ENCODE measurements at regions of chr15 and their contacts with region 1.

Region 1: DNA sequence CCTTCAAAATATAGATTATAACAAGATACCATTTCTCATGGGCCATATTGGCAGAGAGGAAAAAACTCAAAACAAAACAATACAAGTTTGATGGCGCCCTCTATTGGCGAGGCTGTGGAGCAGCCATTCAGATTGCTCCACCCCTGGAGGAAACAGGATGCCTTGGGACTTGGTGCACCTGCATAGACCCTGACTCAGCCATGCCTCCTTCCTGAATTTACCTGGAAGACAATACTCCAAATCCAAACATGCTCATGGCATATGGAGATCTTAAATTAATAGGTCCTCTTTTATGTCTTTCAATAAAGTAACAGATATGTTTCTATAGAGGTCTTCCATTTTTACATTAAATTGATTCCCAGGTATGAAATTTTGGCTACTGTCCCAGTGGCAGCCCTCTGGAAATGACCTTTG is 90.0 kb downstream of the APBA2 start:
- DNase-seq: peak; percentile 37 to 78 (median 61)
- H3K4me3 ChIP-seq: no peak overlapping the region
- H3K4me3 Mint-ChIP-seq: no peak overlapping the region
- H3K27ac ChIP-seq: no peak overlapping the region
- H3K27ac Mint-ChIP-seq: peak overlapping the region in 3 of 8 donors; percentile 40 to 49 (median 49)
- H3K4me1 ChIP-seq: peaks cover 8% of the 10 kb centered on the region
- H3K4me1 Mint-ChIP-seq: peaks cover 14 to 54% (median 14%) of the 10 kb centered on the region in 3 donors
- H3K27me3 ChIP-seq: no peaks in the 10 kb centered on the region
- H3K27me3 Mint-ChIP-seq: no peaks in the 10 kb centered on the region

Region 2: GRCh38 chr15:28873541-28874190 is 102.1 kb before region 1 on chr15:
- CTCF ChIA-PET with region 1: interaction called, 13 read pairs
- POLR2A ChIA-PET with region 1: no interaction called
- DNase-seq: peak in 3 of 5 donors; percentile 19 to 66 (median 56)
- H3K4me3 ChIP-seq: no peak overlapping the region
- H3K4me3 Mint-ChIP-seq: no peak overlapping the region
- H3K27ac ChIP-seq: no peak overlapping the region
- H3K27ac Mint-ChIP-seq: peak overlapping the region in 1 of 8 donors; percentile 19
- H3K4me1 ChIP-seq: peaks cover 9% of the 10 kb centered on the region
- H3K4me1 Mint-ChIP-seq: peaks cover 0 to 4% (median 0%) of the 10 kb centered on the region in 3 donors
- H3K27me3 ChIP-seq: no peaks in the 10 kb centered on the region
- H3K27me3 Mint-ChIP-seq: peaks cover 0 to 3% of the 10 kb centered on the region in 2 donors

Region 3: DNA sequence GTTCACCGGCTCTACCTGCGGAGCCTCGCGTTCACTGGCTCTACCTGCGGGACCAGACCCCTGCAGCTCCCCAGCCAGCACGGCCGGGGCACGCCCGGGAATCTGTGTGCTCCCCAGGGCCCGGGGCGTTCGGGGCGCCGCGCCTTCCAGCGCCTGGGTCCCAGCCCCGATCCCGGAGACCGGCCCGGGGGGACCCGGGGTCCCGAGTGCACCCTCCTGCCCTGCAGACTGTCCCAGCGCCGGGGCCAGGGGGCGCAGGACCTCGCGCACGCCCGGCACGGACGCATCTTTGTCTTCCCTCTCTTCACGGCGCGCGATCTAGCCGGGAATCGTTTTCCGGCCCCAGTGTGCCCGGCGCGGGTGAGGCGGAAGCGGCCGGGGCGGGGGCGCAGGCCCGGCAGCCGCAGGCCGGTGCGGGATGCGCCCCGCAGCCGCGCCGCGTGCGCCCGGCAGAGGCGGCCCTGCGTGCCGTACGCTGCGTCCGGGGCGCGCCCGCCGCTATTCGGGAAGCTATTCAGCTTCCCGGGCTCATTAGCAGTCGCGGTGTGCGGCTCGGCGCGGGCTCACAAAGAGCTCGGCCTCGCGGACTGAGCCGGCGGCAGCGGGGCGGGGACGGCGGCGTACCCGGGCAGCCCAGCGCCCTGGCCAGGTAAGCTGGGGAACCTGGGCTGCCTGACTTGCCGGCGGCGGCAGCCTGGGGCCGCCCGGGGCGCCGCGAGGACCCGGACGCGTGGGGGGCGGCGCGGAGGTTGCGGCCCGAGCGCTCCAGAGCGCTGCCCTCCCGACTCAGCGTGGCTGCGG is 89.9 kb before region 1 on chr15 and contains the start of gene APBA2:
- CTCF ChIA-PET with region 1: interaction called, 12 read pairs
- POLR2A ChIA-PET with region 1: no interaction called
- DNase-seq: peak; percentile 2 to 72 (median 48)
- H3K4me3 ChIP-seq: peak within 1 kb of the TSS; percentile 60
- H3K4me3 Mint-ChIP-seq: peak within 1 kb of the TSS; percentile 76 to 91 (median 88)
- H3K27ac ChIP-seq: peak within 1 kb of the TSS; percentile 27
- H3K27ac Mint-ChIP-seq: peak within 1 kb of the TSS in 4 of 8 donors; percentile 5 to 91 (median 84)
- H3K4me1 ChIP-seq: peaks cover 49% of the 10 kb centered on the region
- H3K4me1 Mint-ChIP-seq: peaks cover 30 to 47% (median 32%) of the 10 kb centered on the region in 3 donors
- H3K27me3 ChIP-seq: no peaks in the 10 kb centered on the region
- H3K27me3 Mint-ChIP-seq: peaks cover 0 to 3% of the 10 kb centered on the region in 2 donors
- total RNA-seq, gene APBA2: 15.7 to 18.0 TPM

Region 4: DNA sequence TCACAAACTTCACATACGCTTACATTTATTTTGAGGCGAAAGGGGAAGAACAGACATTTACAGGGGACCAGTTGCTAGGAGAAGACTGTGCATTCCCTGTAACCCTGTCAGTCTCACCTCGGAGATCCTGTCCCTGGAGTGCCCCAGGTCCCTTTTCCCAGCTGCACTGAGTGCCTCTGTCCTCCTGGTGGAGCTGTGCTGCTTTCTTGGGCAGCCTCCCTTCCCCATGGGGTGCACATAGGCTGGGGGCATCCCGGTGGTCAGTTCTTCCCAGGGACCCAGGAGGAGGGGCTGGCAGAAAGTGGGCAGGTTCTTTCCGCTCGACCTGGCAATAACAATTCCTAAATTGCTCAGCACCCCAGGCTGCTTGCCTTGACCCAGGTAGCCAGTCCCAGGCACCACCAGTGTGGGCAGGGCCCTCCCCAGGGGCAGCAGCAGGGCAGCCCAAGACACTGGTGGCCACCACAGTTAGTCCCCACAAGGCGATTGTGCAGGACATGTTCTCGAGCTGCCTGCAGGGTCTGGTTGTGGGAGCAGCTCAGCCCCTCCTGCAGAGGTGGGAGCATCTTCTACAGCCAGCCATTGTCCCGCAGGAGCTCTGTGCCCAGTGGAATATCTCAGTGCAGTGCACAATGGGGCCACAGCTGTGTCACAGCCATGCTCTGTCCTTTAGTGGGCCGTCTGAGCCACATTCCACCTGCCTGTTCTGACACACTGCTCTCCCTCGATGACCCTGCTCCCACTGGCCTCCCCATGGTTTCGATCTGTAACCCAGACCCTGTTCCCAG is 53.7 kb before region 1 on chr15:
- CTCF ChIA-PET with region 1: interaction called, 10 read pairs
- POLR2A ChIA-PET with region 1: no interaction called
- DNase-seq: no peak
- H3K4me3 ChIP-seq: no peak overlapping the region
- H3K4me3 Mint-ChIP-seq: peak overlapping the region in 6 of 7 donors; percentile 58 to 90 (median 64)
- H3K27ac ChIP-seq: no peak overlapping the region
- H3K27ac Mint-ChIP-seq: peak overlapping the region in 5 of 8 donors; percentile 52 to 95 (median 76)
- H3K4me1 ChIP-seq: peaks cover 42% of the 10 kb centered on the region
- H3K4me1 Mint-ChIP-seq: peaks cover 41 to 86% (median 61%) of the 10 kb centered on the region in 3 donors
- H3K27me3 ChIP-seq: no peaks in the 10 kb centered on the region
- H3K27me3 Mint-ChIP-seq: no peaks in the 10 kb centered on the region

Region 5: DNA sequence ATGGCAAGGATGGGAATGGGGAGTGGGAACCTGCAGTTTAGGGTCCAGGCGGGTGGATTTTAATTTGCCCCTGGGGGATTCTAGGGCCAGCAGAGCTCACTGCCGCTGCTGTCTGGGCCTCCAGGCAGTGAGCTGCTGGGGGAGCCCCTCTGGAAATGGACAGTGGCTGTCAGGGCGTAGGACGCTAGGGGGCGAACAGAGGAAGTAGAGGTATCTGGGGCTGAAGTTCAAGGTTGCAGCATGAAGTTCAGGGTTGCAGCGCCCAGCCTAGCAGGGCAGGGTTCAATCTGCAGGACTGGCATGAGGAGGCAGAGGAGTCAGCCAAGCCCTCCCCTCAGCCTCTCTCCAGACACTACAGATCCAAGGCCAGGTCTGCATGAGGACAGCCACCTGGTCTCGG is 40.4 kb before region 1 on chr15:
- CTCF ChIA-PET with region 1: interaction called, 26 read pairs
- POLR2A ChIA-PET with region 1: no interaction called
- DNase-seq: peak in 4 of 5 donors; percentile 12 to 77 (median 50)
- H3K4me3 ChIP-seq: no peak overlapping the region
- H3K4me3 Mint-ChIP-seq: peak overlapping the region in 5 of 7 donors; percentile 4 to 81 (median 66)
- H3K27ac ChIP-seq: no peak overlapping the region
- H3K27ac Mint-ChIP-seq: peak overlapping the region in 6 of 8 donors; percentile 1 to 93 (median 78)
- H3K4me1 ChIP-seq: peaks cover 73% of the 10 kb centered on the region
- H3K4me1 Mint-ChIP-seq: peaks cover 47 to 82% (median 61%) of the 10 kb centered on the region in 3 donors
- H3K27me3 ChIP-seq: no peaks in the 10 kb centered on the region
- H3K27me3 Mint-ChIP-seq: peaks cover 0 to 4% of the 10 kb centered on the region in 2 donors

Region 6: DNA sequence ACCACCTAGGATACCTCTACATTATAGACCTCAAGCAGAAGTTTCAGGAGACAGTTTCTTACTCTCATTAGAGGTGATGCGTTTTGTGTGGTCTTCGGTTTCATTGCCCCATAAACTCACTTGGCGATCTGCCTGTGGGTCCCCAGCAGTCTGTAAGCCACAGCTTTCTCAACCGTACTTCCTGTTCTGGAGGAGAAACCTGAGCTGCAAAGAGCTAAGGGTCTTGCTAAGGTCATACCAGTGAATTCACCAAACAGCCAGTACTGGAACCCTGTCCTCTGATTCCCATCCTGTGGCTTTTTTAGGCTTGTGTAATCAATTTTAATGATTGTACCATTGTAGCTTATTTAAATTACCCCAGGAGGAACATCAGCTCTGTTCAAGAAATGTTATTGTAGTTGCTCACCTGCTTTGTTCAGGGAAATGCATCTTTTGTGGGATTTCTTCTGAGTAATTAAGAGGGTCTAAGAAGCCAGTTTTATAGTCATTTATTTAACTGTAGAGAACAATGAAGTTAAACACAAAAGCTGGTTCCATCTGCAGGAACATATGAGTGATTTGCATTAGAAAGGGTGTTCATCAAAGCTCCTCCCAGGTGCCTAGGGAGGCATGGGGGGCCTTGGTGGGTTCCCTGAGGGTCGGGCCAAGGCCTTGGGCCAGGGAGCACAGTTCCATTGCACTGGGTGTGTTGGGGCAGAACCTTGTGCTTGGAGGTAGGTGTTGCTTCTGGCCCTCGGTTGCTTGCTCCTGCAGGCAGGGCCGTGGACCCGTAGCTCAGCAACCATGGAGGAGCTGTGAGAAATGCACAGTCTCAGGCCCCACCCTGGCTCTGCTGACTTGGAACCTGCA is 20.4 kb before region 1 on chr15:
- CTCF ChIA-PET with region 1: interaction called, 18 read pairs
- POLR2A ChIA-PET with region 1: interaction called, 3 read pairs
- DNase-seq: peak in 3 of 5 donors; percentile 16 to 61 (median 48)
- H3K4me3 ChIP-seq: no peak overlapping the region
- H3K4me3 Mint-ChIP-seq: peak overlapping the region in 6 of 7 donors; percentile 62 to 83 (median 76)
- H3K27ac ChIP-seq: peak overlapping the region; percentile 60
- H3K27ac Mint-ChIP-seq: peak overlapping the region; percentile 38 to 94 (median 80)
- H3K4me1 ChIP-seq: peaks cover 36% of the 10 kb centered on the region
- H3K4me1 Mint-ChIP-seq: peaks cover 47 to 85% (median 54%) of the 10 kb centered on the region in 3 donors
- H3K27me3 ChIP-seq: no peaks in the 10 kb centered on the region
- H3K27me3 Mint-ChIP-seq: peaks cover 0 to 3% of the 10 kb centered on the region in 2 donors

Measured in CD8-positive, alpha-beta memory T cell (primary cell).